GM18951 (cell line): ENCODE measurements at regions of chr14 and their contacts with region 1.

Region 1: GRCh38 chr14:36373982-36374673 is 53.7 kb upstream of the MBIP start:
- POLR2A ChIP-seq: no peak

Region 2: GRCh38 chr14:35897616-35898111 is 476.5 kb before region 1 on chr14:
- in situ Hi-C with region 1: loop called (anchors 10 kb)
- POLR2A ChIP-seq: no peak

Region 3: GRCh38 chr14:36941783-36942521 is 567.8 kb after region 1 on chr14:
- in situ Hi-C with region 1: no loop called
- POLR2A ChIP-seq: no peak